Activated CD4-positive, alpha-beta T cell treated with anti-CD3 and anti-CD28 coated beads, Interleukin-2, amount 10 ng/mL, durations not matched to agents 24 days and 14 days (primary cell): ENCODE measurements at regions of chr11 and their contacts with region 1.

Region 1: GRCh38 chr11:82900277-82901164 is at the start of gene PRCP:
- DNase-seq: peak; percentile 98
- H3K4me3 Mint-ChIP-seq: peak within 1 kb of the TSS; percentile 92
- H3K27ac Mint-ChIP-seq: peak within 1 kb of the TSS; percentile 100
- H3K4me1 Mint-ChIP-seq: peaks cover 51% of the 10 kb centered on the region
- H3K27me3 Mint-ChIP-seq: no peaks in the 10 kb centered on the region
- total RNA-seq, gene PRCP: 20.6 and 22.6 TPM in 2 replicates

Region 2: GRCh38 chr11:82465481-82465880 is 435.0 kb before region 1 on chr11:
- intact Hi-C with region 1: no loop called
- DNase-seq: no peak
- H3K4me3 Mint-ChIP-seq: no peak overlapping the region
- H3K27ac Mint-ChIP-seq: no peak overlapping the region
- H3K4me1 Mint-ChIP-seq: no peaks in the 10 kb centered on the region
- H3K27me3 Mint-ChIP-seq: no peaks in the 10 kb centered on the region

Region 3: GRCh38 chr11:82873919-82874333 is 26.6 kb before region 1 on chr11:
- intact Hi-C with region 1: loop called (anchors 1 kb)
- DNase-seq: peak; percentile 59
- H3K4me3 Mint-ChIP-seq: peak overlapping the region; percentile 5
- H3K27ac Mint-ChIP-seq: peak overlapping the region; percentile 68
- H3K4me1 Mint-ChIP-seq: peaks cover 23% of the 10 kb centered on the region
- H3K27me3 Mint-ChIP-seq: no peaks in the 10 kb centered on the region

Region 4: DNA sequence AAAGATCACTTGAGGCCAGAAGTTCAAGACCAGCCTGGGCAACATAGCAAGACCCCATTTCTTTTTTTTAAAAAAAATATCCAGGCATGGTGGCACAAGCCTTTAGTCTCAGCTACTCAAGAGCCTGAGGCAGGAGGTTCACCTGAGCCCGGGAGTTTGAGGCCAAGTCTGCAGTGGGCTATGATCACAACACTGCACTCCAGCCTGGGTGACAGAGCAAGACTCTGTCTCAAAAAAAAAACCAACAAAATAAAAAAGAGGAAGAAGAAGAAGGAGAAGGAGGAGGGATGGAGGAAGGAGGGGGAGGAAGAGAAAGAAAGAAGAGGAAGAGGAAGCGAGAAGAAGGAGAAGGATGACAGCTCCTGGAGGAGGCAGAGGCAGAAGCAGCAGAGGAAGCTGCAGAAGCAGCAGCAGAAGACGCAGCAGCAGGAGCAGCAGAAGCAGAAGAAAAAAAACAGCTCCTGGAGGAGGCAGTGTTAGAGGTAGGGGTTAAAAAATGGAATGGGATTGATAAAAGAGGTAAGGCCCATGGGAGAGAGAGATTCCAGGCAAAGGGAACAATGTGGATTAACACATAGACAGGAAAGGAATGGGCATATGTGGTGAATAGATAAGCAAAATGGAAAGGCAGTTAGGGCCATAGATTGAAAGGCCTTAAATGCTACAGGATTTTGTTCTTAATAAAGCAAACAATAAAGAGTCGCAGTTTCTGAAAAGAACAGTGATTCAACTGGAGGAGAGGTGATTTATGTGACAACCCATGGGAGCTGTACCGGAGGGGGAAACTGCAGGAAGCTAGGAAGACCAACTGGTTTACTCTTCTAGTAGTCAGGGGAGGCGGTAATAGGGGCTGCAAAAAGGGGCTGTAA is 11.2 kb before region 1 on chr11:
- intact Hi-C with region 1: no loop called
- DNase-seq: no peak
- H3K4me3 Mint-ChIP-seq: no peak overlapping the region
- H3K27ac Mint-ChIP-seq: no peak overlapping the region
- H3K4me1 Mint-ChIP-seq: no peaks in the 10 kb centered on the region
- H3K27me3 Mint-ChIP-seq: no peaks in the 10 kb centered on the region

Region 5: GRCh38 chr11:82978422-82979099 is 78.0 kb after region 1 on chr11:
- intact Hi-C with region 1: loop called (anchors 5 kb)
- DNase-seq: peak; percentile 66
- H3K4me3 Mint-ChIP-seq: peak overlapping the region; percentile 30
- H3K27ac Mint-ChIP-seq: peak overlapping the region; percentile 25
- H3K4me1 Mint-ChIP-seq: peaks cover 27% of the 10 kb centered on the region
- H3K27me3 Mint-ChIP-seq: peaks cover 7% of the 10 kb centered on the region

Region 6: GRCh38 chr11:83071567-83072349 is 171.2 kb after region 1 on chr11 and contains the start of gene RAB30:
- intact Hi-C with region 1: loop called (anchors 1 kb)
- DNase-seq: peak; percentile 98
- H3K4me3 Mint-ChIP-seq: no peak within 1 kb of the TSS
- H3K27ac Mint-ChIP-seq: no peak within 1 kb of the TSS
- H3K4me1 Mint-ChIP-seq: peaks cover 32% of the 10 kb centered on the region
- H3K27me3 Mint-ChIP-seq: no peaks in the 10 kb centered on the region
- total RNA-seq, gene RAB30: 13.6 and 15.4 TPM in 2 replicates

Region 7: GRCh38 chr11:83193315-83194280 is 293.1 kb after region 1 on chr11 and contains the start of gene ANKRD42:
- intact Hi-C with region 1: loop called (anchors 1 kb)
- DNase-seq: peak; percentile 96
- H3K4me3 Mint-ChIP-seq: peak within 1 kb of the TSS; percentile 95
- H3K27ac Mint-ChIP-seq: peak within 1 kb of the TSS; percentile 90
- H3K4me1 Mint-ChIP-seq: peaks cover 33% of the 10 kb centered on the region
- H3K27me3 Mint-ChIP-seq: no peaks in the 10 kb centered on the region
- total RNA-seq, gene ANKRD42: 4.0 and 4.1 TPM in 2 replicates